Transverse colon (tissue), 4 donors: ENCODE measurements at regions of chr2 and their contacts with region 1.

Region 1: DNA sequence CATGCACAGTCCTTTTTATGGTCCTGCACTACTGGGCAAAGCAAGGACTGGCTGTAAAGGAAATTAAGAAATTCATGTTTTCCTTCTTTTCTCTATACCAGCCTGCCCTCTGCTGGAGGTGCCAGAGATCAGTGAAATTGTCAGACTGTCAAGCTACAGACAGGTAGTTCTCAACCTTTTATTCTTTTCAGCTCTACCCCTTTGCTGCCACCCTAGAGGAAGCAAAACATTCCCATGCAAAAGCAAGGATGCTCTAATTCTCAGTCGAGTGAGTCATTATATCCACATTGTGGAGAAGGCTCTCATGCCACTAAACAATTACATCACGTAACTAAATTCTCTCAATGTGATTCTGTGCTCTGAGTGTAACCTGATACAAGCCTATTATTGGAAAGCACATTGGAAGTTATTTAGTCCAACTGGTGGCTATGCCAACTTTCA is 25.0 kb upstream of the RAPGEF4 start:
- DNase-seq: peak; percentile 54
- H3K4me3 ChIP-seq: no peak overlapping the region
- H3K27ac ChIP-seq: no peak overlapping the region
- H3K4me1 ChIP-seq: no peaks in the 10 kb centered on the region
- H3K27me3 ChIP-seq: no peaks in the 10 kb centered on the region
- CTCF ChIP-seq: peak; percentile 51 to 66 (median 59)
- EP300 ChIP-seq: no peak
- POLR2A ChIP-seq: no peak

Region 2: DNA sequence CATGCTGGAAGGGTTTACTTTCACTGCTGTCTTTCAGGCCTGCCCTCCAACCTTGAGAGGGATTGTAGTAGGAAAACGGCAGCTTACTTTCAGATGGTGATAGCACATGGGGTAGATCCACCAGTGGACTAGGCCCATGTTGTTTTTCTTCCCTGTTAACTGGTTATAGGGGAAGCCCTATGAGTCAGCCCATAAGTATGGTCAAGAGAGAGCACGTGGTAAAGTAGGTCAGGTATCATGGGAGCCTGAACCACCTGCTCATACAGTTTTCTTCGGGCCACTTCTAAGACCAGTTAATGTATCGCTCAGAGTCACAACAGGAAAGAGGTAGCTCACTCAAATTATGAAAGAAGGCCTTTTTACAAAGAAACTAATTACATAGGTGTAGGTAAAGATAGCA is 121.7 kb before region 1 on chr2:
- in situ Hi-C with region 1: loop called in 2 of 4 experiments (anchors 10 kb)
- intact Hi-C with region 1: loop called (anchors 5 kb)
- DNase-seq: no peak
- H3K4me3 ChIP-seq: no peak overlapping the region
- H3K27ac ChIP-seq: no peak overlapping the region
- H3K4me1 ChIP-seq: no peaks in the 10 kb centered on the region
- H3K27me3 ChIP-seq: no peaks in the 10 kb centered on the region
- CTCF ChIP-seq: no peak
- EP300 ChIP-seq: no peak
- POLR2A ChIP-seq: no peak

Region 3: DNA sequence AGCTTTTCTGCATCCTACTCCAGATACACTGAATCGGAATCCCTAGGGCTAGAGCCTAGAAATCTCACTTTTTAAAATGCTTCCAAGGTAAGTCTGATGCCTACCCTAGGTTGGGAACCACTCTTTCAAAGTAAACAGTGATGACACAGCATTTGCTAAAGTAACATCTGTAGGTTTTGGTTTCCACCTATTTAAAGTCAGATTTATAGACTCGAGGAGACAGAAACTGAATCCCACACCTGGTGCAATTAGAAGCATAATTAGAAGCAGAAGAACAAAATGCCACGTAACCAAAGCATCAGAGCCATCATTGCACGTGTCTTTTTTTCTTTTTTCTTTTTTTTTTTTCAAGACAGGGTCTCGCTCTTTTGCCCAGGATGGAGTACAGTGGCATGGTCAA is 113.8 kb before region 1 on chr2:
- in situ Hi-C with region 1: loop called in 2 of 4 experiments (anchors 10 to 25 kb)
- intact Hi-C with region 1: loop called (anchors 5 kb)
- DNase-seq: no peak
- H3K4me3 ChIP-seq: no peak overlapping the region
- H3K27ac ChIP-seq: peak overlapping the region in 1 of 4 donors; percentile 0
- H3K4me1 ChIP-seq: no peaks in the 10 kb centered on the region
- H3K27me3 ChIP-seq: no peaks in the 10 kb centered on the region
- CTCF ChIP-seq: no peak
- EP300 ChIP-seq: no peak
- POLR2A ChIP-seq: no peak

Region 4: GRCh38 chr2:172613040-172613439 is 97.6 kb before region 1 on chr2:
- in situ Hi-C with region 1: loop called in 1 of 4 experiments (anchors 25 kb)
- intact Hi-C with region 1: no loop called
- DNase-seq: no peak
- H3K4me3 ChIP-seq: no peak overlapping the region
- H3K27ac ChIP-seq: no peak overlapping the region
- H3K4me1 ChIP-seq: peaks cover 0 to 3% (median 0%) of the 10 kb centered on the region in 4 donors
- H3K27me3 ChIP-seq: no peaks in the 10 kb centered on the region
- CTCF ChIP-seq: no peak
- EP300 ChIP-seq: no peak
- POLR2A ChIP-seq: no peak

Region 5: DNA sequence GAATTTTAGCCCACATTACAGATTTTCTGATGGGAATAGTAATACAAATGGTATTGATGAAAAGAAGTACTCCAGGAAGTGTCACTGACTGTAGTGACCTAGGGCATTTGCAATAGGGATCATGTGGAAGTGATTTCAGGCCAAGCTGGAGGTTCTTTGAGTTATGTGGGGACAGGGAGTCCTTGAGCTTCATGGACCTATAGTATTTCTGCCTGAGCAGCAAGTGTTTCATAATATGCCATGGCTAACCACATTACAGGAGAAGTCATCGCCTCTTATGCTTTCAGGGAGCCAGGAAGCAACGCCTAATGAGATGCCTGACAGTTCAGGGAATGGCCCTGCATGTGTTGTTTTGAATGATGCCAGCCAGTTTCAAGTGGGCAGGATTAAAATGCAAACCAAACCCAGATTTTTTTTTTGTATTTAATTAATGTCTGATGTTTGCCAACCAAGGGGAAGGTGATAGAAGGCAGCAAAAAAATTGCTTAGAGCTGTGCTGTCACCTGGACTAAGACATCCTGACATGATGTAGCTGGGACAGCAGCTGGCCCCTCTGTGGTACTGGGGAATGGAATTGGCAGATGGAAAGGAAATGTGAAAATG is 134.5 kb after region 1 on chr2:
- in situ Hi-C with region 1: no loop called
- intact Hi-C with region 1: no loop called
- DNase-seq: no peak
- H3K4me3 ChIP-seq: no peak overlapping the region
- H3K27ac ChIP-seq: no peak overlapping the region
- H3K4me1 ChIP-seq: no peaks in the 10 kb centered on the region
- H3K27me3 ChIP-seq: no peaks in the 10 kb centered on the region
- CTCF ChIP-seq: no peak
- EP300 ChIP-seq: no peak
- POLR2A ChIP-seq: no peak